CD4-positive, alpha-beta T cell (primary cell): ENCODE measurements at regions of chr10 and their contacts with region 1.

Region 1: GRCh38 chr10:89217057-89217990 is 10.2 kb upstream of the CH25H start:
- DNase-seq: peak; percentile 39 to 80 (median 58)
- ATAC-seq: peak; percentile 69
- H3K4me3 ChIP-seq: no peak overlapping the region
- H3K4me3 Mint-ChIP-seq: no peak overlapping the region
- H3K27ac ChIP-seq: no peak overlapping the region
- H3K27ac Mint-ChIP-seq: peak overlapping the region; percentile 73
- H3K4me1 ChIP-seq: peaks cover 3% of the 10 kb centered on the region
- H3K4me1 Mint-ChIP-seq: peaks cover 10% of the 10 kb centered on the region
- H3K27me3 ChIP-seq: no peaks in the 10 kb centered on the region
- H3K27me3 Mint-ChIP-seq: peaks cover 3% of the 10 kb centered on the region
- CTCF ChIP-seq: peak; percentile 77

Region 2: GRCh38 chr10:88565072-88565471 is 652.3 kb before region 1 on chr10:
- CTCF ChIA-PET with region 1: no interaction called
- POLR2A ChIA-PET with region 1: no interaction called
- intact Hi-C with region 1: loop called (anchors 1 to 10 kb)
- DNase-seq: peak in 3 of 14 experiments; percentile 23 to 30 (median 29)
- ATAC-seq: peak; percentile 58
- H3K4me3 ChIP-seq: no peak overlapping the region
- H3K4me3 Mint-ChIP-seq: no peak overlapping the region
- H3K27ac ChIP-seq: no peak overlapping the region
- H3K27ac Mint-ChIP-seq: no peak overlapping the region
- H3K4me1 ChIP-seq: peaks cover 6% of the 10 kb centered on the region
- H3K4me1 Mint-ChIP-seq: no peaks in the 10 kb centered on the region
- H3K27me3 ChIP-seq: no peaks in the 10 kb centered on the region
- H3K27me3 Mint-ChIP-seq: no peaks in the 10 kb centered on the region
- CTCF ChIP-seq: peak; percentile 26

Region 3: DNA sequence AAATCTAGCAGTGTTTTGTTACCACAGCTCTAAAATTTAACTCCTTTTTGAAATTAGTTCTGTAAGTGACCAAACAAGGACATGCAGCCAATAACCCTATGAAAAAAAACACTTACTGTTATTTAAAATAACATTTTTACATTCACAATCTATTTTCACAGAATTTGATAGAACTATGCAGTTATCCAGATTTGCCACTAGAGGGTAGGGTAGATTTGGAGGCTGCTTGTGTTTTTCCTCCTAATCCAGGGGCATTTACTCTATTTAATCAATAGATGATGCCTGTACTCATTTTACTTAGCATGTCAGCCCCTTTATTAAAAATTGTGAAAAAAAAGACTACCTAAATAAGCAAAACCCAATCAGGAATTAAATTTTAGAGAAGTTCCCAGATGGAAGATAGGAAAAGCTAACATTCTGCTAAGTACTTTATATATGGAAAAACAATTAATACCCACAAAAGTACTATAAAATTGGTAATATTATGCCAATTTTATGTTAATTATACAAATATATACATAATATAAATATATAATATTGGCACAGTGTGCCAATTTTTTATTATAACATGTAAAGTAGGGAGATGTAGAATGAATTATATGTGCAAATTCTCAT is 529.4 kb before region 1 on chr10:
- CTCF ChIA-PET with region 1: no interaction called
- POLR2A ChIA-PET with region 1: no interaction called
- intact Hi-C with region 1: loop called in 1 of 2 experiments (anchors 5 kb)
- DNase-seq: peak in 3 of 14 experiments; percentile 34 to 41 (median 34)
- ATAC-seq: peak; percentile 49
- H3K4me3 ChIP-seq: no peak overlapping the region
- H3K4me3 Mint-ChIP-seq: no peak overlapping the region
- H3K27ac ChIP-seq: no peak overlapping the region
- H3K27ac Mint-ChIP-seq: no peak overlapping the region
- H3K4me1 ChIP-seq: no peaks in the 10 kb centered on the region
- H3K4me1 Mint-ChIP-seq: no peaks in the 10 kb centered on the region
- H3K27me3 ChIP-seq: no peaks in the 10 kb centered on the region
- H3K27me3 Mint-ChIP-seq: peaks cover 2% of the 10 kb centered on the region
- CTCF ChIP-seq: peak; percentile 87

Region 4: GRCh38 chr10:88835096-88835909 is 382.0 kb before region 1 on chr10:
- CTCF ChIA-PET with region 1: no interaction called
- POLR2A ChIA-PET with region 1: no interaction called
- intact Hi-C with region 1: loop called (anchors 1 to 2 kb)
- DNase-seq: peak; percentile 77 to 93 (median 83)
- ATAC-seq: peak; percentile 91
- H3K4me3 ChIP-seq: no peak overlapping the region
- H3K4me3 Mint-ChIP-seq: no peak overlapping the region
- H3K27ac ChIP-seq: no peak overlapping the region
- H3K27ac Mint-ChIP-seq: no peak overlapping the region
- H3K4me1 ChIP-seq: peaks cover 17% of the 10 kb centered on the region
- H3K4me1 Mint-ChIP-seq: peaks cover 33% of the 10 kb centered on the region
- H3K27me3 ChIP-seq: no peaks in the 10 kb centered on the region
- H3K27me3 Mint-ChIP-seq: no peaks in the 10 kb centered on the region
- CTCF ChIP-seq: peak; percentile 93

Region 5: DNA sequence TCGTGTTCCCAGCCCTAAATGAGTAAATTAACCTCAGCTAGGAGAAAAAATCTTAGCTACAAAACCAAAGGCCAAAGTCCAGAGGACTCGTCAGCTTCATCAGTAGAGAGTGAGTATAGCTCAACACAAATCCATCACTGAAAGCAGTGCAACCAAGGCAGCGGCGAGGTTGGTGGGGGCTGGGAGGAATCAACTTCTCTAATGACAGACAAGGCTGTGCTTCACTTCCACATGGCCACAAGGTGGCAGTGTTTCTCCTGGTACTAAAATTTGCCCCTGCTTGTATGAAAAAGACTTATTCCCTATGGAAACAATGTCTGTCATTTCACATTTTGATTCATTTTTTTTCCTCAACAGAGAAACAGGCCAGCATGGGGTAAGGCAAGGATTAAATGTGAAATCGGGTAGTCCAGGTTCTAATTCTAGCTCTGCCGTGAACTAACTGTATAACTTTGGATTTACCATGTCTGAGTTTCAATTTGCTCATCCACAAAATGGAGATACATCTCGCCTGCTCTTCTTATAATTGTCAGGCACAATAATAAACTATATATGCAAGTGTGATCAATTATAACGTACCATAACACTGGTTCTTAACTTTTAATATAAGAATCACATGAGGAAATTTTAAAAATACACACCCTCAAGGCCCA is 187.4 kb before region 1 on chr10:
- CTCF ChIA-PET with region 1: interaction called, 12 read pairs
- POLR2A ChIA-PET with region 1: no interaction called
- intact Hi-C with region 1: loop called (anchors 1 kb)
- DNase-seq: peak; percentile 44 to 84 (median 58)
- ATAC-seq: peak; percentile 80
- H3K4me3 ChIP-seq: no peak overlapping the region
- H3K4me3 Mint-ChIP-seq: no peak overlapping the region
- H3K27ac ChIP-seq: no peak overlapping the region
- H3K27ac Mint-ChIP-seq: no peak overlapping the region
- H3K4me1 ChIP-seq: peaks cover 3% of the 10 kb centered on the region
- H3K4me1 Mint-ChIP-seq: peaks cover 9% of the 10 kb centered on the region
- H3K27me3 ChIP-seq: no peaks in the 10 kb centered on the region
- H3K27me3 Mint-ChIP-seq: no peaks in the 10 kb centered on the region
- CTCF ChIP-seq: peak; percentile 93

Region 6: DNA sequence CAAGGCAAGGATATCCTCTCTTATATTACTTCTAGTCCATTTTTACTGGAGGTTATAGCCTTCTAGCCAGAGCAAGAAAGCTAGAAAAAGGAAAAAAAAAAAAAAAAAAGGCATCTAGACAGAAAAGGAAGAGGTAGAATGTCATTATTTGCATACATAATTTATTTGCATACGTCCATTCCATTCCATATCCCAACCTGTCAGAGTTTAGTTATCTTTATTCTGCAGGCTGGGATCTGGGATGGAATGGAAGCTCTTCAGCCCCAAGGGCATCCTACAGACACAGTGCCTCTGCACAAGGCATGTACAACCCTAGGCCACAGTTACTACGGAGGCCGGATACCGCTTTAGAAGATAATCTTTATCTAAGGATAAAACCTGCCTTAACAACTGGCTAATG is 19.9 kb before region 1 on chr10:
- CTCF ChIA-PET with region 1: no interaction called
- POLR2A ChIA-PET with region 1: no interaction called
- intact Hi-C with region 1: no loop called
- DNase-seq: no peak
- ATAC-seq: no peak
- H3K4me3 ChIP-seq: no peak overlapping the region
- H3K4me3 Mint-ChIP-seq: no peak overlapping the region
- H3K27ac ChIP-seq: no peak overlapping the region
- H3K27ac Mint-ChIP-seq: no peak overlapping the region
- H3K4me1 ChIP-seq: no peaks in the 10 kb centered on the region
- H3K4me1 Mint-ChIP-seq: no peaks in the 10 kb centered on the region
- H3K27me3 ChIP-seq: no peaks in the 10 kb centered on the region
- H3K27me3 Mint-ChIP-seq: peaks cover 6% of the 10 kb centered on the region
- CTCF ChIP-seq: no peak

Region 7: DNA sequence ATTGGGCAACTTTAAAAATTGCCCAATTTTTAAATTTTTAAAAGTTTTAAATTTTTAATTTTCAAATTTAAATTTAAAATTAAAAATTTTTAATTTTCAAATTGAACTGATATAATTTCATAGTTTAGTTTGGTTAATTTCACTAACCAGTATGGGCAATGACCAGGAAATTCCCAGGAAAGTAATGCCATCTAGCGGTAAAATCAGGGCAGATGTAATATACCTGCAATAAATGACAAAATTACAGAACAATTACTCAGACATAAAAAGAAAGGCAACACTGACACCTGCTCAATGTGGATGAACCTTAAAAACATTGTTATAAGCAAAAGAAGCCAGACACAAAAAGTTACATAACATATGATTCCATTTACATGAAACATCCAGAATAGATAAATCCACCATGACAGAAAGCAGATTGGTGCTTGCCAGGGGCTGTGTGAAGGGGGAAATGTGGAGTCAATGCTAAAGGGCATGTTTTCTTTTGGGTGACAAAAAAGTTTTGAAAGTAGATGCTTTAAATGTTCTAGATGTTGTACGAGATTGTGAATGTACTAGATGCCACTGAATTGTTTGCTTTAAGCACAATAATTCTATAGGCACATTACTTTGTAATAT is 346.6 kb after region 1 on chr10:
- CTCF ChIA-PET with region 1: no interaction called
- POLR2A ChIA-PET with region 1: no interaction called
- intact Hi-C with region 1: loop called (anchors 1 to 2 kb)
- DNase-seq: peak in 4 of 14 experiments; percentile 16 to 72 (median 66)
- ATAC-seq: peak; percentile 63
- H3K4me3 ChIP-seq: no peak overlapping the region
- H3K4me3 Mint-ChIP-seq: no peak overlapping the region
- H3K27ac ChIP-seq: no peak overlapping the region
- H3K27ac Mint-ChIP-seq: no peak overlapping the region
- H3K4me1 ChIP-seq: no peaks in the 10 kb centered on the region
- H3K4me1 Mint-ChIP-seq: no peaks in the 10 kb centered on the region
- H3K27me3 ChIP-seq: no peaks in the 10 kb centered on the region
- H3K27me3 Mint-ChIP-seq: peaks cover 12% of the 10 kb centered on the region
- CTCF ChIP-seq: peak; percentile 94